Right ventricle myocardium inferior (tissue), 1 donor: ENCODE measurements at regions of chr3 and their contacts with region 1.

Region 1: GRCh38 chr3:13895155-13896105 is 15.6 kb upstream of the WNT7A start:
- DNase-seq: peak; percentile 94
- ATAC-seq: peak; percentile 99

Region 2: GRCh38 chr3:14124615-14125190 is 229.3 kb after region 1 on chr3 and contains the starts of genes CHCHD4 and TMEM43:
- intact Hi-C with region 1: loop called (anchors 2 kb)
- DNase-seq: peak; percentile 100
- ATAC-seq: peak; percentile 95
- total RNA-seq, gene CHCHD4: 31.4 TPM
- total RNA-seq, gene TMEM43: 40.0 TPM

Region 3: DNA sequence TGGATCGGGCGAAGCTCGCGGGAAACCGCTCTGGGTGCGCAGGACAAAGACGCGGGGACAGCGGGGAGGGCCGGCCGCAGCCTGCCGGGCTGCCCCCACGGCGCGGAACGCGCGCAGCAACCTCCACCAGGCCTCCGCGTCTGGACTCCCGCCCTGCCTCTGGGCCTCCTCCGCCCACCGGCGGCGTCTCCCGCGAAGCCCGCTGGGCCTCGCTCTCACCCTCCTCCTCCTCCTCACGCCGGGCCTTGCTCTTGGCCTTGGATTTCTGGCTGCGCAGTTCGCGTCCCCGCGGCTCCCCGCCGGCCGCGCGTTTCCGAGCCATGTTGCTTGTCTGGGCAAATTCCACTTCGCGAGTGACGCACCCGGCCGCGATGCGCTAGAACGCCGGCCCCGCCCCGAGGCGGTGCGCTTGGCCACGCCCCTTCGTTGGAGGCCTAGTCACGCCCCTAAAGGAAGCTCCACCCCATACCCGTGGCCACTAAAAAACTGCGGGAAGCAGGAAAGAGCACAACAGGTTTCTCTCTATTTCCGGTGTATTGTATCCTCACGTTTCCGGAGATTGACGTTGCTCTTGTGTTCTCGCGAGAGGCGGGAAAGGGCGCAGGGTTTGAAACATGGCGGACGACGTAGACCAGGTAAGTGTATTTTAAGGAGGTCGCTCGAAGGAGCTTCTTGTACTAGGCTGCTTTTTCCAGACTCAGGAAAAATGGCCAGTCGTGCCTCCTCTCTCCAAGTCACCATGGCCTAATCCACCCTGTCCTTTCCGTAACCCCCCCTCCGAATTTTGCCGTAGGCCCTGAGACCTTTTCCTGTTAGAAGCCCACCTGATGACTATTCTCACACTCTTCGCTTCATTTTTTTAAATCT is 283.1 kb after region 1 on chr3 and contains the starts of genes LSM3 and XPC:
- intact Hi-C with region 1: loop called (anchors 10 kb)
- DNase-seq: peak; percentile 98
- ATAC-seq: peak; percentile 100
- total RNA-seq, gene LSM3: 17.2 TPM
- total RNA-seq, gene XPC: 7.7 TPM

Region 4: GRCh38 chr3:14424711-14425341 is 529.4 kb after region 1 on chr3:
- intact Hi-C with region 1: no loop called
- DNase-seq: no peak
- ATAC-seq: no peak

Region 5: GRCh38 chr3:14467814-14468620 is 572.6 kb after region 1 on chr3:
- intact Hi-C with region 1: loop called (anchors 5 kb)
- DNase-seq: no peak
- ATAC-seq: peak; percentile 59

Region 6: GRCh38 chr3:14548321-14548729 is 652.9 kb after region 1 on chr3:
- intact Hi-C with region 1: loop called (anchors 10 kb)
- DNase-seq: no peak
- ATAC-seq: peak; percentile 86